Heart right ventricle (tissue), 16 donors: ENCODE measurements at regions of chr9 and their contacts with region 1.

Region 1: GRCh38 chr9:21317956-21318923 is 13.1 kb upstream of the IFNA5 start:
- DNase-seq: peak in 1 of 2 donors; percentile 34
- ATAC-seq: peak in 7 of 8 donors; percentile 46 to 80 (median 64)
- H3K4me3 ChIP-seq: no peak overlapping the region
- H3K27ac ChIP-seq: no peak overlapping the region
- H3K4me1 ChIP-seq: peaks cover 0 to 21% (median 0%) of the 10 kb centered on the region in 9 donors
- H3K27me3 ChIP-seq: no peaks in the 10 kb centered on the region
- CTCF ChIP-seq: peak; percentile 32 to 79 (median 69)

Region 2: DNA sequence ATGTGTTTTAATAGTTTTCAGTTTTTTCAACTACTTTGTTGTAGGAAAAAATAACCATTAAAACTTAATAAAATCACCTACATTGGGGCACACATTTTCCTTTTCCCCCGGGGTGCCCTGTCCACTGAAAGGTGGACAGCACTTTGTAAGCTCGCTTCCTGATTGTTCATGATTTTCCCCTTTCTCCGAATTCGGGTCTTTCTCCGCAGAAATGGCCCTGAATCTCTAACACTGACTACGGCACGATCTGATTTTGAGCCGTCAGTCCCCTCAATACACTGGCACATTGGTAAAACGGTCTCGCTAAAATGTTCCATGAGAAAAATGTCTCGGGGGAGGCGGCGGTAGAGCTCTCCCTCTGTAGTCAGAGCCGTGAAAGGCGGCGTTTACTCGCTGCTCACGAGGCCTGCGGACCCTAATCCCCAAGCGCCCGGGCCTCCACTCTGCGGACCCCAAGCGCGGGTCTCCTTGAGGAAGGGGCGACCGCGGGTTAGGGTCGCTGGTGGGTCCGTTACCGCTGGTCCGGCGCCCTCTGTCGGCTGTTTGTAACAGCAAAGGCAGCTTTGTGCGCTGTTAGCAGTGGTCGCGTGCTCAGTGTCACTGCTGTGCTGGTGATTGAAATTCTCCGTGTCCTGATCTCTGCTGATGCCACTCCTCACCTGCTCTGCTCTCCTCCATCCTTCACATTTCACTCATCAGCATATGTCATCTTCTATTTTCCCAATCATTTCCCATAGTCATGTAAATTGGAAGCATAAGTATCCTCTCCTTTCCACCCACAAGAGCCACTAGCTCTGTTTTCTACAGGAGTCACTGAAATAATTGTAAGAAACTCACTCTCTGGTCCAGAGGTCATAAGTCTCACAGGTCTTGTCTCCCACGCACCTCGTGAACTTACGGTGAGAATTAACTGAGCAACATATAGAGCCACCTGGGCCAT is 77.8 kb after region 1 on chr9:
- intact Hi-C with region 1: loop called in 4 of 10 experiments (anchors 2 to 5 kb)
- DNase-seq: peak; percentile 29 to 57
- ATAC-seq: peak; percentile 43 to 81 (median 71)
- H3K4me3 ChIP-seq: peak overlapping the region in 9 of 10 donors; percentile 33 to 62 (median 55)
- H3K27ac ChIP-seq: no peak overlapping the region
- H3K4me1 ChIP-seq: peaks cover 0 to 11% (median 5%) of the 10 kb centered on the region in 9 donors
- H3K27me3 ChIP-seq: peaks cover 0 to 98% (median 79%) of the 10 kb centered on the region in 7 donors
- CTCF ChIP-seq: peak; percentile 40 to 90 (median 81)

Region 3: GRCh38 chr9:21434202-21435014 is 116.2 kb after region 1 on chr9:
- intact Hi-C with region 1: loop called in 1 of 10 experiments (anchors 10 kb)
- DNase-seq: peak in 1 of 2 donors; percentile 29
- ATAC-seq: no peak
- H3K4me3 ChIP-seq: no peak overlapping the region
- H3K27ac ChIP-seq: no peak overlapping the region
- H3K4me1 ChIP-seq: no peaks in the 10 kb centered on the region
- H3K27me3 ChIP-seq: peaks cover 0 to 51% (median 24%) of the 10 kb centered on the region in 7 donors
- CTCF ChIP-seq: peak in 7 of 9 donors; percentile 43 to 56 (median 48)

Region 4: DNA sequence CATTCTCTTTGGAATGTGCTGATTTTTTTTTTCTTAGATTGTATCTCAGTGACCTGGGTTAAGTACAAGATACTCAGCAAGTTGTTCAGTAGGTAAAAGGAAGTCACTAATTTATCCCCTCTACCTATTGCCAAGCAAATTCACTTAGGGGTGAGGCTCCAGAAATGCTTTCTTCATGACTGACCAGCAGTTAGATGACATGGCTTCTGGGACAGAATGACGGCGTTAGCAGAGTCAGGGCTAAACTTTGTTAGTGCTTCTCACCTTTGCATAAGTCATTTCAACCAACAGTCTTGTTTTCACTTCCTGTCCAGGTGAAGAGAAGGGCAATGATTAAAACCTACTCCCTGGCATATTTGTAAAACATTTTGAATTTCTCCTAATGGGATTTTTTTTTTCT is 464.0 kb after region 1 on chr9:
- intact Hi-C with region 1: loop called in 4 of 10 experiments (anchors 5 kb)
- DNase-seq: no peak
- ATAC-seq: no peak
- H3K4me3 ChIP-seq: no peak overlapping the region
- H3K27ac ChIP-seq: no peak overlapping the region
- H3K4me1 ChIP-seq: peaks cover 0 to 21% (median 0%) of the 10 kb centered on the region in 9 donors
- H3K27me3 ChIP-seq: peaks cover 0 to 22% (median 5%) of the 10 kb centered on the region in 7 donors
- CTCF ChIP-seq: no peak